ENCODE measurements at regions of chr9 and their contacts with region 1.

Region 1: DNA sequence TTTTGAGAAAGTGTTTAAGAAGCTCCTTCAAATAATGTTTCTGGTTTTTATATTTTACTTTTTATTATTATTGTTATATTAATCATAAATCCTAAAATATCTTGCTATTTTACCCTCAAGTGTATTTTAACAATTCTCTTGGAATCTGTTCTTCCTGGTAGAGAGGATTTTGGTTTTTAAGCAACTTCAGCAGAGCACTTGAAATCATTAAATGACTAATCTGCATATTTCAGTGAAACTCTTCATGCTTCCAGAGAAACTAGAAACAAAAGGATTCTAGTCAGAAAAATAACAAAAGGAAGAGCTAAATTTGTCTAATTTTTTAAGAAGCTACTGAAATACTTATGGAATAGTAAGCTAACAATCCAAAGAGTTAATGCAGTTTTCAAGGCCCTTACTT is 1057.3 kb downstream of the TLE1 start:
- H3K4me3 Mint-ChIP-seq: no peak overlapping the region
- H3K27ac Mint-ChIP-seq: no peak overlapping the region
- H3K4me1 Mint-ChIP-seq: no peaks in the 10 kb centered on the region
- H3K27me3 Mint-ChIP-seq: no peaks in the 10 kb centered on the region

Region 2: GRCh38 chr9:80571965-80572364 is 60.1 kb before region 1 on chr9:
- intact Hi-C with region 1: loop called (anchors 10 kb)
- H3K4me3 Mint-ChIP-seq: no peak overlapping the region
- H3K27ac Mint-ChIP-seq: no peak overlapping the region
- H3K4me1 Mint-ChIP-seq: no peaks in the 10 kb centered on the region
- H3K27me3 Mint-ChIP-seq: no peaks in the 10 kb centered on the region

Measured in dendritic cell treated with granulocyte-macrophage colony-stimulating factor and Interleukin-4, amounts not matched to agents 40 ng/mL and 50 ng/mL, for 4 days (primary cell).